HepG2 (cell line): ENCODE measurements at regions of chr3 and their contacts with region 1.

Region 1: GRCh38 chr3:101561630-101562328 is at the start of gene TRMT10C:
- DNase-seq: peak; percentile 80
- ATAC-seq: peak; percentile 100
- H3K4me3 ChIP-seq: peak within 1 kb of the TSS; percentile 76 to 91 (median 87)
- H3K27ac ChIP-seq: peak within 1 kb of the TSS; percentile 84
- H3K4me1 ChIP-seq: peaks cover 40% of the 10 kb centered on the region
- H3K27me3 ChIP-seq: no peaks in the 10 kb centered on the region; a peak in 2 of 5 replicates
- CTCF ChIP-seq: peak; percentile 8; the same call in 1 of the 2 replicates
- EP300 ChIP-seq: 0 out of 4 replicates have a peak, but pooled peaks of 1 of the 2 experiments have one; percentile 26
- POLR2A ChIP-seq: peak; percentile 94
- RAD21 ChIP-seq: peak; percentile 28; the same call in 1 of the 2 replicates
- total RNA-seq, gene TRMT10C: 39.2 and 58.8 TPM in 2 replicates

Region 2: GRCh38 chr3:101495552-101495951 is 66.2 kb before region 1 on chr3:
- CTCF ChIA-PET with region 1: no interaction called
- POLR2A ChIA-PET with region 1: no interaction called
- in situ Hi-C with region 1: no loop called
- intact Hi-C with region 1: loop called (anchors 5 kb)
- DNase-seq: no peak
- ATAC-seq: peak; percentile 80
- H3K4me3 ChIP-seq: no peak overlapping the region
- H3K27ac ChIP-seq: no peak overlapping the region
- H3K4me1 ChIP-seq: peaks cover 7% of the 10 kb centered on the region
- H3K27me3 ChIP-seq: no peaks in the 10 kb centered on the region
- CTCF ChIP-seq: peak; percentile 46
- EP300 ChIP-seq: no peak
- POLR2A ChIP-seq: no peak
- RAD21 ChIP-seq: no peak

Region 3: GRCh38 chr3:101512646-101513418 is 48.9 kb before region 1 on chr3 and contains the start of gene SENP7:
- CTCF ChIA-PET with region 1: no interaction called
- POLR2A ChIA-PET with region 1: interaction called, 18 read pairs
- in situ Hi-C with region 1: no loop called
- intact Hi-C with region 1: loop called (anchors 2 kb)
- DNase-seq: peak; percentile 71
- ATAC-seq: peak; percentile 85
- H3K4me3 ChIP-seq: peak within 1 kb of the TSS; percentile 80 to 92 (median 83)
- H3K27ac ChIP-seq: peak within 1 kb of the TSS; percentile 93
- H3K4me1 ChIP-seq: peaks cover 13% of the 10 kb centered on the region
- H3K27me3 ChIP-seq: no peaks in the 10 kb centered on the region; a peak in 1 of 5 replicates
- CTCF ChIP-seq: no peak
- EP300 ChIP-seq: no peak
- POLR2A ChIP-seq: peak; percentile 48 to 66
- RAD21 ChIP-seq: no peak
- total RNA-seq, gene SENP7: 10.0 and 10.3 TPM in 2 replicates

Region 4: GRCh38 chr3:101518421-101518871 is 43.3 kb before region 1 on chr3:
- CTCF ChIA-PET with region 1: no interaction called
- POLR2A ChIA-PET with region 1: interaction called, 18 read pairs
- in situ Hi-C with region 1: no loop called
- intact Hi-C with region 1: loop called (anchors 2 kb)
- DNase-seq: peak; percentile 29
- ATAC-seq: peak; percentile 64
- H3K4me3 ChIP-seq: no peak overlapping the region; a peak in 1 of 6 replicates
- H3K27ac ChIP-seq: no peak overlapping the region
- H3K4me1 ChIP-seq: peaks cover 45% of the 10 kb centered on the region
- H3K27me3 ChIP-seq: no peaks in the 10 kb centered on the region
- CTCF ChIP-seq: no peak
- EP300 ChIP-seq: no peak
- POLR2A ChIP-seq: no peak
- RAD21 ChIP-seq: no peak

Region 5: DNA sequence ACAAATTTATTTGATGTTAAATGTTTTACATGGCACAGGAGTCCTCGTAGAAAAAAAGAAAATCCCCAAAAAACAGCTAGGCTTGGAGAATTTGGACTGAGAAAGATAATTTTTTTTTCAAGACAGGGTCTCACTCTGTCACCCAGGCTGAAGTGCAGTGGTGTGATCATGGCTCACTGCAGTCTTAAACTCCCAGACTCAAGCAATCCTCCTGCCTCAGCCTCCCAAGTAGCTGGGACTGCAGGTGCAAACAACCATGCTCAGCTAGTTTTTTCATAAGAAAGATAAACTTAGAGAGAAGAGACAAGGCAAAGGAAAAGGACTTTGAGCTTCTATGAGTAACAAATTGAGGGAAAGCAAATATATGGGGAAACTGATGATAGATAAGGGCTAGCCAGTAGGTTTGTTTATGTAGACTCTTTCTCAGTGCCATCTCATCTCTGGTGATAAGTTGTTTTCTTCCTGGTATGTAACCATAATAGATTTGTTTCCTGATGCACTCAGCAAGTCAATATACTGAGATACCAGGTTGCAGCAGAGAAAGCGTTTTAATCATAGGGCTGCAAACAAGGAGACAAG is 13.2 kb before region 1 on chr3:
- CTCF ChIA-PET with region 1: no interaction called
- POLR2A ChIA-PET with region 1: interaction called, 13 read pairs
- in situ Hi-C with region 1: no loop called
- intact Hi-C with region 1: no loop called
- DNase-seq: peak; percentile 87
- ATAC-seq: peak; percentile 87
- H3K4me3 ChIP-seq: no peak overlapping the region; a peak in 1 of 6 replicates
- H3K27ac ChIP-seq: peak overlapping the region; percentile 55
- H3K4me1 ChIP-seq: peaks cover 57% of the 10 kb centered on the region
- H3K27me3 ChIP-seq: no peaks in the 10 kb centered on the region
- CTCF ChIP-seq: no peak
- EP300 ChIP-seq: peak in 1 of 2 experiments; percentile 81; a peak in 2 of 4 replicates
- POLR2A ChIP-seq: no peak
- RAD21 ChIP-seq: no peak